Mammary epithelial cell (primary cell): ENCODE measurements at regions of chr12 and their contacts with region 1.

Region 1: GRCh38 chr12:47264951-47265350 is 185.2 kb upstream of the AMIGO2 start:
- DNase-seq: no peak
- H3K4me3 ChIP-seq: no peak overlapping the region
- H3K27ac ChIP-seq: no peak overlapping the region
- H3K4me1 ChIP-seq: peaks cover 32% of the 10 kb centered on the region
- H3K27me3 ChIP-seq: no peaks in the 10 kb centered on the region
- CTCF ChIP-seq: no peak

Region 2: DNA sequence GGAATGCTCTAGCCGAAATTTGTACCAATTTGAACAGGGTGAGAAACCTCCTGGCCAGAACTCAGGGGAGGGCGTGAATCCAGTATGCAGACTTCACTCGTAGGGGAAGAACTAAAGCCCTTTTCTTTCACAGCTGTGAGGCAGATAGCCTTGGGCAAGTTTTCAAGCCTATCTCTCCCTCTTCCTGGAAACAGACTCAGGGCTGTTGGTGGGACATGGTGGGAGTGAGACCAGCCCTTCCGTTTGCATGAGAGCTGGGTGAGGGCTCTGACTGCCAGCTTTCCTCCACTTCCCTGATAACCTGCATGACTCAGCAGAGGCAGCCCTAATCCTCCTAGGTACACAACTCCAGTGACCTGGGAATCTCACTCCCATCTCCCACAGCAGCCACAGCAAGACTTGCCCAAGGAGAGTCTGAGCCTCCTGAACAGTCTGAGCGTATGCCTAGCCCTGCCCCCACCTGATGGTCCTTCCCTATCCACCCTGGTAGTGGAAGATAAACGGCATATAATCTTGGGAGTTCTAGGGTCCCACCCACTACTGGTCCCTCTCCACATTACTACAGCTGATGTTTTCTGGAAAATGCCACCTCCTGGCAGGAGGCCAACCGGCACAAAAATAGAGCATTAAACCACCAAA is 15.1 kb before region 1 on chr12:
- CTCF ChIA-PET with region 1: no interaction called
- dilution Hi-C with region 1: no loop called
- in situ Hi-C with region 1: no loop called
- intact Hi-C with region 1: loop called (anchors 2 kb)
- DNase-seq: peak; percentile 24
- H3K4me3 ChIP-seq: no peak overlapping the region
- H3K27ac ChIP-seq: no peak overlapping the region
- H3K4me1 ChIP-seq: peaks cover 18% of the 10 kb centered on the region
- H3K27me3 ChIP-seq: no peaks in the 10 kb centered on the region
- CTCF ChIP-seq: no peak